ENCODE measurements at regions of chr21 and their contacts with region 1.

Region 1: GRCh38 chr21:23837564-23837963 is 1769.7 kb downstream of the MRPL39 start:
- DNase-seq: peak; percentile 16
- ATAC-seq: peak; percentile 60
- H3K4me3 ChIP-seq: no peak overlapping the region
- H3K27ac ChIP-seq: no peak overlapping the region
- H3K4me1 ChIP-seq: peaks cover 6% of the 10 kb centered on the region
- H3K27me3 ChIP-seq: no peaks in the 10 kb centered on the region
- CTCF ChIP-seq: no peak

Region 2: GRCh38 chr21:23887725-23888306 is 50.3 kb after region 1 on chr21:
- CTCF ChIA-PET with region 1: no interaction called
- POLR2A ChIA-PET with region 1: no interaction called
- intact Hi-C with region 1: loop called (anchors 5 kb)
- DNase-seq: no peak
- ATAC-seq: no peak
- H3K4me3 ChIP-seq: no peak overlapping the region
- H3K27ac ChIP-seq: no peak overlapping the region
- H3K4me1 ChIP-seq: peaks cover 4% of the 10 kb centered on the region; the same call in 1 of the 2 replicates
- H3K27me3 ChIP-seq: no peaks in the 10 kb centered on the region
- CTCF ChIP-seq: no peak

Region 3: GRCh38 chr21:23936224-23936623 is 98.7 kb after region 1 on chr21:
- CTCF ChIA-PET with region 1: no interaction called
- POLR2A ChIA-PET with region 1: interaction called, 10 read pairs
- intact Hi-C with region 1: no loop called
- DNase-seq: peak; percentile 53
- ATAC-seq: peak; percentile 81
- H3K4me3 ChIP-seq: no peak overlapping the region
- H3K27ac ChIP-seq: no peak overlapping the region
- H3K4me1 ChIP-seq: no peaks in the 10 kb centered on the region; the same call in 1 of the 2 replicates
- H3K27me3 ChIP-seq: no peaks in the 10 kb centered on the region
- CTCF ChIP-seq: peak; percentile 75

Region 4: DNA sequence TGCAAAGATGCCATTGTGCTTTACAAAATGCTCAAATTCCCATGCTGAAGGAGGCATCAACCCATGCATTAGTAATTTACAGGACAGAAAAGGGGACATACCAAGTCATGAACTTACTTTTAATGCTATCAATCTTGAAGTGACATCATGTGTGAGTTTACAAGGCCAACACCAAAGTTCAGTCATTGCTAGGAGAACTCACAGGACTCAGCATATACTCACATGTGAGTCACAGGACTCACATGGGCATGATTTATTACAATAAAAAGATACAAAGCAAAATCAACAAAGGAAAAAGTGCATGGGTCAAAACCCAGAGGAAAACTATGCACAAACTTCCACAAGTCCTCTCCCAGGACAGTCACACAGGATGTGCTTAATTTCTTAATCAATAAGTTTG is 113.7 kb after region 1 on chr21:
- CTCF ChIA-PET with region 1: no interaction called
- POLR2A ChIA-PET with region 1: no interaction called
- intact Hi-C with region 1: loop called (anchors 1 kb)
- DNase-seq: peak; percentile 90
- ATAC-seq: peak; percentile 95
- H3K4me3 ChIP-seq: no peak overlapping the region
- H3K27ac ChIP-seq: peak overlapping the region; percentile 84
- H3K4me1 ChIP-seq: peaks cover 27% of the 10 kb centered on the region
- H3K27me3 ChIP-seq: no peaks in the 10 kb centered on the region
- CTCF ChIP-seq: no peak

Measured in PC-3 (cell line).